ENCODE measurements at regions of chr3 and their contacts with region 1.

Region 1: GRCh38 chr3:21752749-21753347 is 1.8 kb upstream of the ZNF385D start:
- DNase-seq: no peak
- ATAC-seq: peak; percentile 66

Region 2: DNA sequence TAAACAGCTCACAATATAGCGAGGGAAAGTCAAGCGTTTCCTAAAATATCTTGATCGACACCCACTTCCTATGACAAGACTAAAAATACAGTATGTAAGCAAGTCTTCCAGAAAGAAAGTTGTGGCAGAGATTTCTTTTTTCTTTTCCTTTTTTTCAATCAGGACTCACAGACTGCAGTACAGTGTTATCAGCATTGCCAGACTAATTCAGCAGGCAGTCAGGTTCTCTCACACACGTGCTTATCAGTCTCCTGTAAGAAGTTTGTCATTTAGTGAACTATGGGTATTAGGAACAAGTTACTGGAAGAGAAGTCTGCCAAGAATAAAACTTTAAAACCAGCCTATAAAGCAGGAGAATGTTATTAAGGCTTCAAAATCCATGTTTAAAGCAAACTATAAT is 31.0 kb after region 1 on chr3:
- intact Hi-C with region 1: no loop called
- DNase-seq: no peak
- ATAC-seq: no peak

Region 3: GRCh38 chr3:21795152-21795837 is 42.4 kb after region 1 on chr3:
- intact Hi-C with region 1: loop called (anchors 5 kb)
- DNase-seq: peak; percentile 85
- ATAC-seq: peak; percentile 98

Region 4: DNA sequence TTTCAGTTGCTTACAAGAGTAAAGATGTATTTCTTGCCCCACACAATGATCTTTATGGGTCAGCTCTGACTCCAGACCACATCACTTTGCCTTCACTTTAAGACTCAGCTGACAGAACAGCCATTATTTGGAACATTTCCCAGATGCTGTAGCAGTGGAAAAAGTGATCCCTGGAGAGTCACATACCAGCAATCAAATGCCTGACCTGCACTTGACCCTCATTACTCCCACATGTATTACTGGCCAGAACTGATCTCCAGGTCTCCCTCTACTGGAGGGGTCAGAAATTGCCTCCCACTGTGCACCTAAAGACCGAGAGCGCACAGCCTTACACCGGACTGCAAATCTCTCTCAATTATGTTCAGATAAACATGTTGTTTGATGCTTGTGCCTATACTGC is 86.7 kb after region 1 on chr3:
- intact Hi-C with region 1: loop called (anchors 1 kb)
- DNase-seq: no peak
- ATAC-seq: peak; percentile 86

Region 5: GRCh38 chr3:21894459-21895340 is 141.9 kb after region 1 on chr3:
- intact Hi-C with region 1: loop called (anchors 2 kb)
- DNase-seq: no peak
- ATAC-seq: peak; percentile 64

Region 6: DNA sequence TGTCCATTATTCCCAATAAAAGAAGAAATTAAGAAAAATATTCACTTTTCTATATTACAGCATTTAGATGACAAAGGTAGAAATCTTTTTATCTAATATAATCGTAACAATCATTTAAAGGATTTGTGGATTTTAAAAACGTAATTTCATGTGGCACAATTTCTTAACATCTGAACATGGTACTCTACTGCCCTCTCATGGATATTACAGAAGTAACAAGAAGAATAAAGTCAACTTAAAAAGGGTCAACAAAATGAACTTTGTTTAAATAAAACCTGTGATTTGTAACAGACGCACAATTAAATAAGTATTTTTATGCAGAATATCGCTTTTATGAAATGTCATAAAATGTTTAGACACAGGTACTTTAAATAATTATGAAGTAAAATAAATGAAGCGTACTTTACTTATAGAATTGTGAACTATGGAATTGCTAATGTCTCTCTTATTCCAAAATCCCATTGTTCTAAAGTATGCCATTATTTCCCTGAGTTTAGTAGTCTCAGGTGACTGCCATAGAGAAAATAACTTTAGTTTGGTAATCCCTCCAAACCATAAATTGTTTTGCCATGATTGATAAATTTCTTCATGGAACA is 365.0 kb after region 1 on chr3:
- intact Hi-C with region 1: loop called (anchors 5 kb)
- DNase-seq: no peak
- ATAC-seq: no peak

Measured in Right ventricle myocardium inferior (tissue), 1 donor.